Calu3 (cell line): ENCODE measurements at regions of chr22 and their contacts with region 1.

Region 1: DNA sequence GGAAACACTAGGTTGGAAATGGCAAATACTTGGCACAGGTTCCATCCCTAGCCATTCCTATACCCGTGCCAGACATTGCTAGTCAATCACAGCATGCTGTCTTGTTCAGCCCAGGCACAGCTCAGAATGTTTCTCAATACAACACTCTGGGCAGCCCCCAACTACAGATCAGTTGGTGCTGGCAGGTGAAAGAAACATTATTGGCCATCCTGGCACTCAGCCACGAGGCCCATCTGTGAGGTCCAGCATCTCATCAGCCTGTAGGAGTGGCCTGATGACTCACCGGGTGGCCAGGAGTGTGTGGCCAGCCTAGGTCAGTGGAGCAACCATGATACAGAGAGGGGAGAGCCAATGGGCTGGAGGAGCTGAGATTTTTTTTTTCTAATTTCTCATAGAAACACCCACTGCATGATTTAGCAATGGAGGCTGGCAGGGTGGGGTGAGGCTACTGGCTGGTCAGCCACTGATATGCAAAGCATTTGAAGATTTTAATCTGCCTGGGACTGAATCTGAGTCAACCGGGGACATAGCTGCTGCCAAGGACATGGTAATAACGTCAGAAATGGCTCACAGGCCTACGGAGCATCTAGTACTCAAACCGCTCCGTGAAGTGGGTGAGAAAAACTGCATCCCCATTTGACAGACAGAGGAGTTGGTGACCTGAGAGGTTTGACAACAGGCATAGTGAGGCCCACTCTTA is 5.4 kb downstream of the MYO18B start:
- DNase-seq: peak; percentile 93
- H3K4me3 Mint-ChIP-seq: peak overlapping the region; percentile 47
- H3K27ac Mint-ChIP-seq: peak overlapping the region; percentile 89
- H3K4me1 Mint-ChIP-seq: peaks cover 62% of the 10 kb centered on the region
- H3K27me3 Mint-ChIP-seq: no peaks in the 10 kb centered on the region
- CTCF ChIP-seq: no peak

Region 2: GRCh38 chr22:25772288-25772687 is 24.9 kb after region 1 on chr22:
- CTCF ChIA-PET with region 1: interaction called, 10 read pairs
- intact Hi-C with region 1: no loop called
- DNase-seq: no peak
- H3K4me3 Mint-ChIP-seq: no peak overlapping the region
- H3K27ac Mint-ChIP-seq: no peak overlapping the region
- H3K4me1 Mint-ChIP-seq: no peaks in the 10 kb centered on the region
- H3K27me3 Mint-ChIP-seq: peaks cover 61% of the 10 kb centered on the region
- CTCF ChIP-seq: no peak